WTC11 (cell line): ENCODE measurements at regions of chr1 and their contacts with region 1.

Region 1: GRCh38 chr1:112715264-112716053 is at the start of gene PPM1J:
- DNase-seq: peak; percentile 100
- ATAC-seq: peak; percentile 85
- H3K4me3 Mint-ChIP-seq: peak within 1 kb of the TSS; percentile 81
- H3K27ac Mint-ChIP-seq: no peak within 1 kb of the TSS
- H3K4me1 Mint-ChIP-seq: peaks cover 50% of the 10 kb centered on the region
- H3K27me3 Mint-ChIP-seq: peaks cover 43% of the 10 kb centered on the region
- CTCF ChIP-seq: no peak
- total RNA-seq, gene PPM1J: 19.3 to 23.5 TPM (median 22.6 TPM) in 3 replicates

Region 2: DNA sequence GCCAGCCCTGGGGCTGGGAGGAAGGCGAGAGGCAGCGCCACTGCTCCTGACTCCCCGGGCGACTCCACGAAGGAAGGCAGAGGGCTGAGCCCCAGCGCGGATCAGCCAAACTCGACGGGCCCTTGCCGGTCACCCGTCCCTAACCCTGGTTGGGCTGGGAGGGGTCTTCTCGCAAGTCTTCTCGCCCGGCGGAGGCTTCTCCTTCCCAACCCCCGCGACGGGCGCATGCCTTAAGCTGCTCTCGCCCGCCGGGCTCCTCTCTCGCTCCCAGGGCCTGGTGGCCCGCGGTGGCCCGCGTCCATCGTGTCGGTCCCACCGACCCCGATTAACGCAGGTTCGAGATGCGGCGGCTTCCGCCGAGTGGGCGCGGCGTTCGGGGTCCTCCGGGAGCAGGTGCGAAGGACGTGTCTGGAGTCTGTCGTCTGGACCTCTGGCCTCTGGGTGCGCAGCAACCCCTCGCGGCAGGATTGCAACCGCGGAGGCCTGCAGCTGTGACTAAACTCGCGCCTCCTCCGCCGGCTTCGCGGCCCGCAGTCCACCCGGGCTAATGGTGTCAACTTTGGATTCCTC is 28.6 kb after region 1 on chr1:
- CTCF ChIA-PET with region 1: interaction called, 21 read pairs
- POLR2A ChIA-PET with region 1: no interaction called
- DNase-seq: peak; percentile 69
- ATAC-seq: peak; percentile 81
- H3K4me3 Mint-ChIP-seq: peak overlapping the region; percentile 57
- H3K27ac Mint-ChIP-seq: no peak overlapping the region
- H3K4me1 Mint-ChIP-seq: peaks cover 8% of the 10 kb centered on the region
- H3K27me3 Mint-ChIP-seq: peaks cover 82% of the 10 kb centered on the region
- CTCF ChIP-seq: no peak

Region 3: GRCh38 chr1:112803906-112804762 is 88.7 kb after region 1 on chr1:
- CTCF ChIA-PET with region 1: interaction called, 373 read pairs
- POLR2A ChIA-PET with region 1: no interaction called
- DNase-seq: peak; percentile 85
- ATAC-seq: peak; percentile 93
- H3K4me3 Mint-ChIP-seq: no peak overlapping the region
- H3K27ac Mint-ChIP-seq: no peak overlapping the region; the same call in 1 of the 2 replicates
- H3K4me1 Mint-ChIP-seq: peaks cover 49% of the 10 kb centered on the region
- H3K27me3 Mint-ChIP-seq: peaks cover 29% of the 10 kb centered on the region
- CTCF ChIP-seq: peak; percentile 50

Region 4: DNA sequence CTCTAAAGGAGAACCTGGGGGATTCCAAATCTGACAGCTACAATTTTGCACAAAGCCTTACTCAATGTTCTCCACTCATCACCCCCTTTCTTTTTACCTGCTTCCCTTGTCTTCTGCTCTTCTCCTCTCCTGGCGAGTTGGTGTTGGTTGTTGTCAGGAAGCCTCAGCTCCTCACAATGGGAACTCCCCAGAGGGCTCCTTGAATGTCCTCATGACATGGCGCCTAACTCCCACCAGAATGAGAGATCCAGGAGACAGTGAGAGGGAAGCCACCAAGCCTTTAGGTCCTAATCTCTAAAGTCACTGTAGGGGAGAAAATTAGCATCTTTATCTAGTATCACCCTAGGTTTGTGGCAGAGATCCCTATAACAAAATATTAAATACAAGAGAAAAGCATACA is 152.7 kb after region 1 on chr1:
- CTCF ChIA-PET with region 1: interaction called, 18 read pairs
- POLR2A ChIA-PET with region 1: interaction called, 4 read pairs
- DNase-seq: no peak
- ATAC-seq: no peak
- H3K4me3 Mint-ChIP-seq: no peak overlapping the region
- H3K27ac Mint-ChIP-seq: no peak overlapping the region
- H3K4me1 Mint-ChIP-seq: peaks cover 35% of the 10 kb centered on the region
- H3K27me3 Mint-ChIP-seq: no peaks in the 10 kb centered on the region
- CTCF ChIP-seq: no peak

Region 5: DNA sequence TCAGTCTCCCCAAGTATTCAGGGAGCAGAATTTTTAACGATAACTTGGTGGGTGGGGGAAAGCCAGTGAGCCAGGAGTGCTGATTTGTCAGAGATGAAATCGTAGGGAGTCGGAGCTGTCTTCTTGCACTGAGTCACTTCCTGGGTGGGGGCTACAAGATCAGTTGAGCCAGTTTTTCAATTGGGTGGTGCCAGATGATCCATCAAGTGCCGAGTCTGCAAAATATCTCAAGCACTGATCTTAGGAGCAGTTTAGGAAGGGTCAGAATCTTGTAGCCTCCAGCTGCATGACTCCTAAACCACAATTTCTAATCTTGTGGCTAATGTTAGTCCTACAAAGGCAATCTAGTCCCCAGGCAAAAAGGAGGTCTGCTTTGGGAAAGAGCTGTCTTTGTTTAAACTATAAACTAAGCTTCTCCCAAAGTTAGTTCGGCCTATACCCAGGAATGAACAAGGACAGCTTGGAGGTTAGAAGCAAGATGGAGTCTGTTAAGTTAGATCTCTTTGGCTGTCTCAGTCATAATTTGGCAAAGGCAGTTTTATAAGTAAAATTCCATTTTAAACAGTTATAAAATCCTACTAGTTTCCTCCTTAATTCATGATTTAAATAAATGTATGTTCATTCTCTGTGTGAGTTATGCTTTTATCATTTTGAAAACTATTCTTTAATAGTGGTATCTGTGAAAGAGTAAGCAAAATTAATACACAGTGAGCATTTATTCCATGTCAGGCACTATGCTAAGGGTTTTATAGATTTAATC is 188.8 kb after region 1 on chr1:
- CTCF ChIA-PET with region 1: interaction called, 12 read pairs
- POLR2A ChIA-PET with region 1: no interaction called
- DNase-seq: no peak
- ATAC-seq: no peak
- H3K4me3 Mint-ChIP-seq: no peak overlapping the region
- H3K27ac Mint-ChIP-seq: peak overlapping the region; percentile 55
- H3K4me1 Mint-ChIP-seq: peaks cover 55% of the 10 kb centered on the region
- H3K27me3 Mint-ChIP-seq: no peaks in the 10 kb centered on the region
- CTCF ChIP-seq: no peak